ENCODE measurements at regions of chr20 and their contacts with region 1.

Region 1: GRCh38 chr20:25369529-25369928 is 21.1 kb downstream of the ABHD12 start:
- DNase-seq: no peak
- ATAC-seq: no peak
- H3K4me3 ChIP-seq: no peak overlapping the region
- H3K27ac ChIP-seq: no peak overlapping the region
- H3K4me1 ChIP-seq: no peaks in the 10 kb centered on the region
- H3K27me3 ChIP-seq: no peaks in the 10 kb centered on the region
- CTCF ChIP-seq: no peak
- POLR2A ChIP-seq: no peak

Region 2: GRCh38 chr20:25327878-25328235 is 41.7 kb before region 1 on chr20:
- intact Hi-C with region 1: loop called in 1 of 10 experiments (anchors 5 kb)
- DNase-seq: no peak
- ATAC-seq: no peak
- H3K4me3 ChIP-seq: no peak overlapping the region
- H3K27ac ChIP-seq: no peak overlapping the region
- H3K4me1 ChIP-seq: peaks cover 0 to 21% (median 2%) of the 10 kb centered on the region in 12 donors
- H3K27me3 ChIP-seq: no peaks in the 10 kb centered on the region
- CTCF ChIP-seq: no peak
- POLR2A ChIP-seq: no peak

Measured in heart left ventricle (tissue), 16 donors.